GM10248 (cell line): ENCODE measurements at regions of chr16 and their contacts with region 1.

Region 1: GRCh38 chr16:87853411-87854052 is 15.8 kb downstream of the SLC7A5 start:
- DNase-seq: peak; percentile 88
- CTCF ChIP-seq: no peak

Region 2: DNA sequence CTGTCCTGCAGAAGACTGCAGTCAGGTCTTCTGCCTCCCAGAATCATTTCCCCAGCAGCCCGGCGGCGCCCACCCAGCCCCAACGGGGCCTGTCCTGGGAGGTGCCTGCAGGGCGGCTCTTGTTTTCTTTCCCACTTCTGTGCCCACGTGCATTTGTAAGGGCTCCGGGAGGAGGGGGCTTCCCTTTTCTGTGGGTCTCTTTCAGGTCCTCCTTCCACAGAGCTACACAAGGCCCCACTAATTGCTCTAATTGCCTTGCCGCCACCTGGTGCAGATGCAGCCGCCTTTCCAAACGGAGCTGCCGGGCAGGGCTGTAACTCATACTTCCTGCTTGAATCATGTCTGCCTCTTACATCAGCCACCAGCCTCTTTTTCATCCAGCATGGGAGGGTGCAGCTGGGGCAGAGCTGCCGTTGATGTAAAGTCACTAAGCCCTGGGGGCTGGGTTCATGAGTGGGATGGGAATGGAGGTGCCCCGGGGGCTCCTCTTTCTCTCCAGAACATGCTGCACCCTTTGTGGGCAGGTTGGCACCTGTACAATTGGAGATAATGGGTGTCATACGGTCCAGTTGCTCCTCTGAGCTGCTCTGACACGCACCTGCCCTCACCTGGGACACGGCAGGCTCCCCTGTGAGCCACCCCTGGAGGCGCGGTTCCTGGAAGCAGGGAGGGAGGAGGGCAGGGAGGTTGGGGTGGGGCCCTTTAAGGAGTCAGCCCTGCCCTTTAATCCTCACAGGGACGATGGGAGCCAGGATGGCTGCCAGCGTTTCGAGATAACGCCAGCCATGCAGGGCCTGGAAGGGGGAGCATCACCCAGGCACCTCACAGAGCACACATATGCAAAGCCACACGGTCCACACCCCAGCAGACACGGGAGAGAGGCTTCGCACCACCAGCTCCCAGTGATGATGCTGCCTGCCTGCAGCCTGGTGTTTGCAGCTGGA is 46.7 kb before region 1 on chr16:
- CTCF ChIA-PET with region 1: interaction called, 32 read pairs
- POLR2A ChIA-PET with region 1: no interaction called
- DNase-seq: no peak
- CTCF ChIP-seq: no peak

Region 3: GRCh38 chr16:87821376-87822107 is 32.0 kb before region 1 on chr16:
- CTCF ChIA-PET with region 1: interaction called, 17 read pairs
- POLR2A ChIA-PET with region 1: no interaction called
- DNase-seq: no peak
- CTCF ChIP-seq: no peak

Region 4: GRCh38 chr16:87834623-87835407 is 18.7 kb before region 1 on chr16:
- CTCF ChIA-PET with region 1: interaction called, 67 read pairs
- POLR2A ChIA-PET with region 1: no interaction called
- DNase-seq: no peak
- CTCF ChIP-seq: no peak

Region 5: DNA sequence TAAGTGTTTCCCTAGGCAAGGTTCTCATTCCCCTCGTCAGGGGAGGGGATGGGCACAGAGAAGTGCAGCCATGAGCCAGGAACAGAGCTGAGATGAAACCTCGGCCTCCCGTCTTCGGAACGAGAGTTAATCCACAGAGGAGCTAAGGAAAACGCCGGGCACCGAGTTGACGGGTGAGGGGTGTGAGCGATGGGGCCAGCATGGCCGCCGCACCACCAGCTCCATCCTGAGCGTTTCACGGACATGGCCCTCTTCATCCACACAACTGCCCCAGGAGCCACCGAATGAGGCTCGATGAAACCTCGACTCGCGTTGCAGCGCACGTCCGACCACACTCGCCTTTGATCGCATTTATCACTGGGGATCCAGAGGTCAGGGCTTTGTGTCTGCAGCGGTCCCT is 61.3 kb after region 1 on chr16:
- CTCF ChIA-PET with region 1: interaction called, 12 read pairs
- POLR2A ChIA-PET with region 1: no interaction called
- DNase-seq: no peak
- CTCF ChIP-seq: no peak